ENCODE measurements at regions of chr3 and their contacts with region 1.

Region 1: DNA sequence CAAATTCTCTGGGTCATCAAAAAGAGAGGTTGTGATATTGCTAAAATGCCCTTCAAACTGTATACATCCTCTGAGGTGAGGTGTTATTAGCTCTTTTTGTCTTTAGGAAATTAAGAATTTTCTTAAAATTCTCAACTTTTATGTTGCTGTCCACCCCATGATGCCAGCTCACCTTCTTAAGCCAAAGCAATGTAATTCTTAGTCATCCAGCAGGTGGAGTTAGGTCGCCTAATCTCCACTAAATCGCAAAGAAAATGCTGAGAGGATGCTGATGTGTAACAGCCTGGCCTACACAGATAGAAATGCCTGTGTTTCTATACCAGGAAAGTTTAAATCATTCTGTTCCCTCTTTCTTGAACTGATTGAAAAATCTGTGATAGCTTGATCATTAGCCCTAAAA is 770.2 kb upstream of the ALCAM start:
- DNase-seq: peak; percentile 33
- H3K4me3 ChIP-seq: no peak overlapping the region
- H3K27ac ChIP-seq: no peak overlapping the region
- H3K27me3 ChIP-seq: no peaks in the 10 kb centered on the region
- CTCF ChIP-seq: peak; percentile 64

Region 2: GRCh38 chr3:104273046-104273649 is 323.4 kb before region 1 on chr3:
- CTCF ChIA-PET with region 1: interaction called, 12 read pairs
- POLR2A ChIA-PET with region 1: no interaction called
- DNase-seq: no peak
- H3K4me3 ChIP-seq: no peak overlapping the region
- H3K27ac ChIP-seq: no peak overlapping the region
- H3K27me3 ChIP-seq: no peaks in the 10 kb centered on the region
- CTCF ChIP-seq: peak; percentile 85

Region 3: DNA sequence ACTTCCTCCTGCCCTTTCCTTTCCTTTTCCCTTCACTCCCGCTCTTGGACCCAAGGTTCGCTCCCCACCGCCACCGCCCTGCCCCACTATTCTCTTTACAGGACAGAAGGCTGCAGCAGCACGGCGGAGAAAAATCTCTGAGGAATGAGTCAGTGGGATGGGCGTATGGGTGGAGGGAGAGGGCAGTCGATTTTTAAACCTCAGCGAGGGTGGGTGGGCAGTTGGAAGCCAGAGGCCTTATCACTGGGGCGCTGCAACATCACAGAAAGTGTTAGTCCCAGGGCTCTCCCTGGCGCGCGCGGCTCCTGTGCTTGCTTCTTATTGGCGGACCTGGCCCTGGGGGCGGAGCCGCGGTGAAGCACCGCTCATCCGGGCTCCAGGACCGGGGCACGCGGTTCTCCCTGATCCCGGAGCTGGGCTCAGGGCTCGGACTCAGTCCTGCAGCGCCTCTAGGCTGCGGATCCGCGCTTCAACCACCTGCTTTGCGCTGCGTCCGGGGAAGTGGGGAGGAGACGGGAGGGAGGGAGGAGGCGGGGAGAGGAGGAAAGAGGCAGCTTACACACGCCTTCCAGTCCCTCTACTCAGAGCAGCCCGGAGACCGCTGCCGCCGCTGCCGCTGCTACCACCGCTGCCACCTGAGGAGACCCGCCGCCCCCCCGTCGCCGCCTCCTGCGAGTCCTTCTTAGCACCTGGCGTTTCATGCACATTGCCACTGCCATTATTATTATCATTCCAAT is 769.9 kb after region 1 on chr3 and contains the start of gene ALCAM:
- CTCF ChIA-PET with region 1: interaction called, 27 read pairs
- POLR2A ChIA-PET with region 1: no interaction called
- DNase-seq: peak; percentile 98
- H3K4me3 ChIP-seq: peak within 1 kb of the TSS; percentile 96
- H3K27ac ChIP-seq: peak within 1 kb of the TSS; percentile 94
- H3K27me3 ChIP-seq: no peaks in the 10 kb centered on the region
- CTCF ChIP-seq: peak; percentile 70
- polyA plus RNA-seq, gene ALCAM: 198 and 275 TPM in 2 replicates

Region 4: DNA sequence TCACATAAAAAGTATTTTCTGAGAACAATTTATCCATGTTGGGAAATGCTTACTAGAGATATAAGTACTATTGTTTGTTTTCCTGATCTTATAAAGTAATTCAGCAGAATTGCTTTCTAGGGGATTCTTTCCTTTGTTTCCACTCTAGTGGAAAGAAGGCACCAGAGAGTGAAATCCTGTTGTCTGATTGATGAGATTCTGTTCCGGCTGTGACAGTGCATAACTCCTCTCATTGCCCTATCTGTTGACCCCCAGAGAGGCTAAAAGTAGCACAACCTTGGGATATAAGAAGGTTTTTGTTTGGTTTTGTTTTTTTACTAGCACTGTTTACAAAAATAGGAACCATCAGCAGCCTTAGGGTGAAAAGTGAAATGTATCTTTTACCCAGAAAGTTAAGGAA is 884.2 kb after region 1 on chr3:
- CTCF ChIA-PET with region 1: interaction called, 11 read pairs
- POLR2A ChIA-PET with region 1: no interaction called
- DNase-seq: no peak
- H3K4me3 ChIP-seq: no peak overlapping the region
- H3K27ac ChIP-seq: no peak overlapping the region
- H3K27me3 ChIP-seq: no peaks in the 10 kb centered on the region
- CTCF ChIP-seq: no peak

Measured in AG04450 (cell line).